ENCODE measurements at regions of chr1 and their contacts with region 1.

Region 1: GRCh38 chr1:151098126-151098525 is 27.6 kb downstream of the GABPB2 start:
- DNase-seq: no peak
- H3K4me3 ChIP-seq: no peak overlapping the region
- H3K27ac ChIP-seq: no peak overlapping the region
- H3K4me1 ChIP-seq: no peaks in the 10 kb centered on the region
- H3K27me3 ChIP-seq: no peaks in the 10 kb centered on the region
- CTCF ChIP-seq: no peak

Region 2: GRCh38 chr1:150979092-150980056 is 118.8 kb before region 1 on chr1:
- CTCF ChIA-PET with region 1: no interaction called
- POLR2A ChIA-PET with region 1: interaction called, 11 read pairs
- intact Hi-C with region 1: no loop called
- DNase-seq: peak; percentile 95
- H3K4me3 ChIP-seq: no peak overlapping the region
- H3K27ac ChIP-seq: peak overlapping the region; percentile 33
- H3K4me1 ChIP-seq: peaks cover 32% of the 10 kb centered on the region
- H3K27me3 ChIP-seq: no peaks in the 10 kb centered on the region
- CTCF ChIP-seq: peak; percentile 100

Region 3: GRCh38 chr1:151130987-151131586 is 33.0 kb after region 1 on chr1:
- CTCF ChIA-PET with region 1: interaction called, 3 read pairs
- POLR2A ChIA-PET with region 1: no interaction called
- intact Hi-C with region 1: loop called (anchors 5 kb)
- DNase-seq: peak; percentile 71
- H3K4me3 ChIP-seq: no peak overlapping the region
- H3K27ac ChIP-seq: no peak overlapping the region
- H3K4me1 ChIP-seq: no peaks in the 10 kb centered on the region
- H3K27me3 ChIP-seq: no peaks in the 10 kb centered on the region
- CTCF ChIP-seq: no peak

Region 4: GRCh38 chr1:151243683-151244216 is 145.6 kb after region 1 on chr1:
- CTCF ChIA-PET with region 1: no interaction called
- POLR2A ChIA-PET with region 1: no interaction called
- intact Hi-C with region 1: no loop called
- DNase-seq: no peak
- H3K4me3 ChIP-seq: no peak overlapping the region
- H3K27ac ChIP-seq: peak overlapping the region; percentile 28
- H3K4me1 ChIP-seq: no peaks in the 10 kb centered on the region
- H3K27me3 ChIP-seq: no peaks in the 10 kb centered on the region
- CTCF ChIP-seq: no peak

Region 5: GRCh38 chr1:151254217-151255213 is 156.4 kb after region 1 on chr1 and contains the start of gene PSMD4:
- CTCF ChIA-PET with region 1: interaction called, 6 read pairs
- POLR2A ChIA-PET with region 1: no interaction called
- intact Hi-C with region 1: loop called (anchors 10 kb)
- DNase-seq: peak; percentile 99
- H3K4me3 ChIP-seq: peak within 1 kb of the TSS; percentile 79
- H3K27ac ChIP-seq: peak within 1 kb of the TSS; percentile 75
- H3K4me1 ChIP-seq: peaks cover 5% of the 10 kb centered on the region
- H3K27me3 ChIP-seq: no peaks in the 10 kb centered on the region
- CTCF ChIP-seq: no peak
- total RNA-seq, gene PSMD4: 312 and 339 TPM in 2 replicates

Measured in A673 (cell line).